Transverse colon (tissue), 4 donors: ENCODE measurements at regions of chr12 and their contacts with region 1.

Region 1: GRCh38 chr12:124625867-124626675 is 58.7 kb upstream of the NCOR2 start:
- DNase-seq: peak; percentile 87
- H3K4me3 ChIP-seq: no peak overlapping the region
- H3K27ac ChIP-seq: peak overlapping the region; percentile 68 to 76 (median 72)
- H3K4me1 ChIP-seq: peaks cover 13 to 28% (median 21%) of the 10 kb centered on the region in 4 donors
- H3K27me3 ChIP-seq: no peaks in the 10 kb centered on the region
- CTCF ChIP-seq: no peak
- EP300 ChIP-seq: no peak
- POLR2A ChIP-seq: peak; percentile 33

Region 2: GRCh38 chr12:124734224-124734788 is 108.2 kb after region 1 on chr12:
- in situ Hi-C with region 1: no loop called
- intact Hi-C with region 1: loop called (anchors 10 kb)
- DNase-seq: no peak
- H3K4me3 ChIP-seq: no peak overlapping the region
- H3K27ac ChIP-seq: peak overlapping the region; percentile 26 to 44 (median 36)
- H3K4me1 ChIP-seq: peaks cover 0 to 17% (median 6%) of the 10 kb centered on the region in 4 donors
- H3K27me3 ChIP-seq: no peaks in the 10 kb centered on the region
- CTCF ChIP-seq: no peak
- EP300 ChIP-seq: no peak
- POLR2A ChIP-seq: no peak